ENCODE measurements at regions of chr10 and their contacts with region 1.

Region 1: DNA sequence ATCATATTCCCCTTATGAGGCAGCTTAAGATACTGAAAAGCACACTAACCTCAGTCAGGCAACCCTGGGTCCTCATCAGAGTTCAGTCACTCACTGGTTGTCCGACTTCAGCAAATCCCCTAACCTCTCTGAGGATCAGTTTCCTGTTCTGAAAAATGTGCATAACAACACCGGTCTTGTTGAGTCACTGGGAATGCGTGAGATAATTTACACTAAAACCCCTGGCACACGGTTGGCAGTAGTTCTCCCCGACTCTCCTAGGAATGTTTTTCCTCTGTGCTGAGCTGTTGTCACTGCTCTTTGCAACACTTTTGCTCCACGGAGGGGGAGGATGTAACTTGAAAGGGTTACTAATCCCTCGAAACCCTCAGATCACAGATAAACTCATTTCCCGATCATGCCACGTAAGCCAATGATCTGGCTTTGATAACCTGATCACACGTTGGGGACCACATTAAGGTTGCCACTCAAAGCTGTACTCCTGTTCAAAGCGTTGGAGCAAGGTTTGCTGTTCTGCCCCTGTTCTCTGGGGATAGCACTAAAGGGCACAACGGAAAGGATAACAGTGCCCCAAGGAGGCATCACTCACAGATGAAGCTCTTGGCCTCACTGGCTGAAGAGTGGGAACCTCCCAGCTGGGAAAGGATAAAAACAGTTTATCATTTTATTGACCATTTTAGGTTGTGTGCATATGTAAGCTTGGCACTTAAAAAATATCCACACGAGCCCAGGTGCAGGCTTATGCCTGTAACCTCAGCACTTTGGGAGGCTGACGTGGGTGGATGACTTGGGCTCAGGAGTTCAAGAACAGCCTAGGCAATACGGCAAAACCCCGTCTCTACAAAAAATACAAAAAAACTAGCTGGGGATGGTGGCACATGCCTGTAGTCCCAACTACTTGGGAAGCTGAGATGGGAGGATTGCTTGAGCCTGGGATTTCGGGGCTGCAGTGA is 5.0 kb upstream of the RBM17 start:
- DNase-seq: peak; percentile 67
- H3K4me3 Mint-ChIP-seq: peak overlapping the region; percentile 80
- H3K27ac Mint-ChIP-seq: peak overlapping the region; percentile 94
- H3K4me1 Mint-ChIP-seq: peaks cover 64% of the 10 kb centered on the region
- H3K27me3 Mint-ChIP-seq: no peaks in the 10 kb centered on the region

Region 2: DNA sequence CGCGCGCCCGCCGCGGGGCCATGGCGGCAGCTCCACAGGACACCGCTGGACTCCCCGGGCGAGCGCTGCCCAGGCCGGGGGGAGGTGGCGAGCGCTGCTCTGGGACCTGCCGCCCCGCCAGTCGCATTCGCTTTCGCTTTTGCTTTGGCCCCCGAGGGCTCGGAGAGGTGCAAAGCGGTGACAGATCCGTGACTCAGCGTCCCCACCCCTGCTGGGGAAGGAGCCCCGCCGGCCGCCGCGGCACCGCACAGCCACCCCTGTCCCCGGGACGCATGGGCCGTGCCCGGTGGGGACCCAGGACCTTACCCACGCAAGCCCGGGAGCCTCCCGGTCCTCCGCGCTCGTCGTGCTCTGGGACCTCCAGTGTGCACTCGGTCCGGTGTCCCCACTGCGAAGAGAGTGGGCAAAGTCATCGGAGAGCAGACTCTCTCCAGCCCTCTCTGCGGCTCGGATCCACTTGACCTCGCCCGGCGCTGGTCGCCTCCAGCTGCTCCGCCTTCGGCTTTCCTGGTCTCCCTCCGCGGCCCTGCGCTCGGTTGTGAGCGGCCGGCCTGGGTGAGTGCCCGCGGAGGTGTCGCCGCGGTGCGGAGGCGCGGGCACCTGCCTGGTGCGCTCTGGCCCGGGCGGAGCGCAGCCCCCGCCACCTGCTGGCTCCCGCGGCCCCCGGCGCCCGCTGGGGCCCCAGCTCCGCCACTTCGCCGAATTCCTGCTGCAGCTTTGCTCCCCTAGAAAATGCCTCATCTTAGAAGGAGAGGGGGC is 106.1 kb before region 1 on chr10 and contains the start of gene IL15RA:
- intact Hi-C with region 1: loop called (anchors 1 kb)
- DNase-seq: peak; percentile 88
- H3K4me3 Mint-ChIP-seq: peak within 1 kb of the TSS; percentile 93
- H3K27ac Mint-ChIP-seq: peak within 1 kb of the TSS; percentile 90
- H3K4me1 Mint-ChIP-seq: peaks cover 31% of the 10 kb centered on the region
- H3K27me3 Mint-ChIP-seq: peaks cover 3% of the 10 kb centered on the region
- total RNA-seq, gene IL15RA: 23.4 and 24.4 TPM in 2 replicates

Region 3: GRCh38 chr10:6072215-6072934 is 11.4 kb before region 1 on chr10:
- intact Hi-C with region 1: loop called (anchors 1 kb)
- DNase-seq: peak; percentile 29
- H3K4me3 Mint-ChIP-seq: peak overlapping the region; percentile 59
- H3K27ac Mint-ChIP-seq: peak overlapping the region; percentile 97
- H3K4me1 Mint-ChIP-seq: peaks cover 80% of the 10 kb centered on the region
- H3K27me3 Mint-ChIP-seq: no peaks in the 10 kb centered on the region

Region 4: GRCh38 chr10:6136215-6137201 is 52.7 kb after region 1 on chr10:
- intact Hi-C with region 1: no loop called
- DNase-seq: peak; percentile 43
- H3K4me3 Mint-ChIP-seq: peak overlapping the region; percentile 49
- H3K27ac Mint-ChIP-seq: peak overlapping the region; percentile 91
- H3K4me1 Mint-ChIP-seq: peaks cover 66% of the 10 kb centered on the region
- H3K27me3 Mint-ChIP-seq: peaks cover 9% of the 10 kb centered on the region

Region 5: GRCh38 chr10:6300106-6300783 is 216.4 kb after region 1 on chr10:
- intact Hi-C with region 1: no loop called
- DNase-seq: no peak
- H3K4me3 Mint-ChIP-seq: peak overlapping the region; percentile 6
- H3K27ac Mint-ChIP-seq: peak overlapping the region; percentile 56
- H3K4me1 Mint-ChIP-seq: peaks cover 60% of the 10 kb centered on the region
- H3K27me3 Mint-ChIP-seq: no peaks in the 10 kb centered on the region

Region 6: DNA sequence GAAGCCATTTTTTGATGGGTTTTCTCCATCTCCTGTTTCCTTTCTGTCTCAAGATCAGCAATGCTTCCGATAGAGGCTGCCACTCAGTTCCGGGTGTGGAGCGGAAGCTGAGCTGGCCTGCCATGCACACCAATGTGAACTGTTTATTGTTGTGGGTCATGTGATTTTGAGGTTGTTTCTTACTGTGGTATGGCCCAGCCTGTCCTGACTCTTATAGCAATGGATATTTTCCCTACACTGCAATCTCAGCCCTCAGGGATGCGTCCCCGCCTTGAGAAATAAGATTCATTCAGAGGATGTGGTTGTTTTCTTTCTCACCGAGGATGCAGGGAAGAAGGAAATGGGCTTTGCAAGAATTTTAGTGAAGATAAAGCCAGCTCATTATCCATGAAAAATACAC is 253.6 kb after region 1 on chr10:
- intact Hi-C with region 1: no loop called
- DNase-seq: no peak
- H3K4me3 Mint-ChIP-seq: no peak overlapping the region
- H3K27ac Mint-ChIP-seq: no peak overlapping the region
- H3K4me1 Mint-ChIP-seq: peaks cover 5% of the 10 kb centered on the region
- H3K27me3 Mint-ChIP-seq: peaks cover 2% of the 10 kb centered on the region

Measured in activated T-helper 1 cell treated with anti-CD3 and anti-CD28 coated beads, Interleukin-12 subunit alpha, Interleukin-12 subunit beta, Interleukin-2, Interleukin-4 antibody, amounts not matched to agents 30 ng/mL and 10 ng/mL and 1 ng/mL, durations not matched to agents 14 hours and 24 hours and 36 hours (primary cell).